Ascending aorta (tissue), 2 donors: ENCODE measurements at regions of chr1 and their contacts with region 1.

Region 1: DNA sequence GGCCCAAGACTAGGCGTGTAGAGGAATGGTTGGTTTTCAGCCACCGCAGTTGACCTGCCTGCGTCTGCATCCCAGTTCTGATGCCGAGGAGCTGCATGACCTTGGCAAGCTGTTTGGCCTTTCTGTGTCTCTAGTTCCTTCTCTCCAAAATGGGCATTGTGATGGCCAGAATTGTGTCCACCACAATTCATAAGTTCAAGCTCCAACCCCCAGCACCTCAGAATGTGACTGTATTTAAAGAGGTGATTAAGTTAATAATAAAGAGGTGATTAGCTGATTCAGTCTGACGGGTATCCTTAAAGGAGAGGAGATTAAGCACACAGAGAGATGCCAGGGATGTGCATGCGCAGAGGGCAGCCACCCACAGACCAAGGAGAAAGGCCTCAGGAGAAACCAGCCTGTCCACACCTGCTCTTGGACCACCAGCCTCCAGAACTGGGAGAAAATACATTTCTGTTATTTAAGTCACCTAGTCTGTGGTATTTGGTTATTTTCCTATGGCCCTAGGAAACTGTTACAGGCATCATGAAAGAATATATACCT is 28.5 kb downstream of the MAB21L3 start:
- DNase-seq: no peak
- H3K4me3 ChIP-seq: no peak overlapping the region
- H3K27ac ChIP-seq: no peak overlapping the region
- H3K4me1 ChIP-seq: no peaks in the 10 kb centered on the region
- H3K27me3 ChIP-seq: no peaks in the 10 kb centered on the region
- CTCF ChIP-seq: no peak

Region 2: GRCh38 chr1:116157096-116157495 is 17.4 kb after region 1 on chr1:
- intact Hi-C with region 1: no loop called
- DNase-seq: no peak
- H3K4me3 ChIP-seq: no peak overlapping the region
- H3K27ac ChIP-seq: no peak overlapping the region
- H3K4me1 ChIP-seq: no peaks in the 10 kb centered on the region
- H3K27me3 ChIP-seq: no peaks in the 10 kb centered on the region
- CTCF ChIP-seq: no peak

Region 3: GRCh38 chr1:116168277-116169097 is 28.8 kb after region 1 on chr1:
- intact Hi-C with region 1: loop called (anchors 1 kb)
- DNase-seq: peak in 1 of 2 donors; percentile 87
- H3K4me3 ChIP-seq: peak overlapping the region; percentile 73 to 75
- H3K27ac ChIP-seq: peak overlapping the region; percentile 62 to 65
- H3K4me1 ChIP-seq: peaks cover 16 to 22% of the 10 kb centered on the region in 2 donors
- H3K27me3 ChIP-seq: no peaks in the 10 kb centered on the region
- CTCF ChIP-seq: peak; percentile 88 to 94 (median 94)

Region 4: DNA sequence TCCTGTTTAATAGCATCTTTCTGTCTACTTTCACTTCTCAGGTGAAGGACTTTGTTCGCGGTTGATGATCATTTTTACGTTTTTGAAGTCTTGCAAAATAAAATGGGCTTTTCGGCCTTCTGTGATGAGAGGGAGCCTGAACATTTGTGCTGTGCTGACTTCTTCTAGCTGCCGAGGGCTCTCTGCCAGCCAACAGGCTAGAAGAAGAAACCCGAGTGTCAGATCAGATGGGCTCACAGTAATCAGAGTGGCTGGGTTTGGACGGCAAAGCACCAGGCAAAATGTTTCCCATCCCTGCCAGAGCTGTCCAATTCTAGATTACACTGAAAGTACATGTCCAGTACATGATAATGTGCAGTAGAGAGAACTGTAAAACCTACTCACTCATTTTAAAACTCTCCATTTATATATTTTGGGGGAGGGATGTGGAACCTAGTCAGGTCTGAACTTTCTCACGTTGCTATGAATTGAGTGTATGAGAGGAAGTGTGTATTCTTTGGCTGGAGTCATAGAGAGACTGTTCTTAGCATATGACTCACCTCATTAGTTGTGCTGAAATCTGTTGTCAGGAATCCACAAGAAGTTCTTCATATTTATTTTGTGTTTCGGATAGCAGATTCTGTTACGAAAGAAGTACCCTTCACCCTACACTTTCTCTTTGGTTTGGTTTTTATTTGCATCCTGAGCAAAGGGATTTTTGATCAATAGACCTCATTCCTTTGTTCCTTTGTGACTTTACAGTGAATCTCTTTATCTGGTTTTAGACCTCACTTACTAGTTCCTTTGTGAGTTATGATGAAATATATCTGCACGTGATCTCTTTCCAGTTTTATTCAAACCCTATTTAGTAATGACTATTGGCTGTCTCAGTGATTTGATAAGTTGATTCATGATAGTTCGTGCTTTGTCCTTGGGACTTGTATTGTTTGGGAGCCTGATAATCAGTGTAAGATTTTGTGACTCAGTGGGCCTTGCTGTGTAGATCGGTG is 238.2 kb after region 1 on chr1:
- intact Hi-C with region 1: loop called (anchors 5 kb)
- DNase-seq: peak in 1 of 2 donors; percentile 75
- H3K4me3 ChIP-seq: peak overlapping the region; percentile 78 to 81
- H3K27ac ChIP-seq: peak overlapping the region; percentile 95 to 96
- H3K4me1 ChIP-seq: peaks cover 27 to 71% of the 10 kb centered on the region in 2 donors
- H3K27me3 ChIP-seq: no peaks in the 10 kb centered on the region
- CTCF ChIP-seq: no peak

Region 5: DNA sequence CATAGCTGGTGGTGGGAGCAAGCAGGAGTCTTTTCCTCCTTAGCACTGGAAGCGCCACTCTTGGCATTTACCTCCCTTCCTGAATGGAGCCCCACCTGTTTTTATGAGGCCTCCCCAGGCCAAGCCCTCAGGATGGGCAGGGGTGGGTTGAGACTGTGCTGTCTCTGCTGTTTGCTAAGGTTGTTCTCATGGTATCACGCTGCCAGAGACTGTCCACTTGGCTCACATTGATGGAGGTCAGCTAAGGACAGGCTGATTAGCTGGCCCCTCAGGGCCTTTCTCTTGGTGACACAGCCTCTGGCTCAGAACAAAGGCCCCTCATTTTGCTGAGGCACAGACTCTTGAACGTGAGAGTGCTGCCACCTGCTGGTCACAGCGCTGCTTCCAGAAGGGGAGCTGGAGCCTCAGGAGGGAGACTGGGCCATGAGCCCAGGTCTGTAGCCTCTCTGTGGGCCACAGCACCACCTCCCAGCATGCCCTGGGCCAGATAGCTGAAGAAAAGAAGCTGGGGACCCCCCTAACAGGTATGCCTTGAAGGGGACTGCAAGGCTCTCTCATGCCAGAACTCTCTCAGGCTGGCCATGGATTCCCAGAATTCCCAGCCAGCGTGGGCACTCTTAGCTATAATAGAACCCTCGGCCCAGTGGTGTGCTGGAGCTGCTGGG is 345.5 kb after region 1 on chr1:
- intact Hi-C with region 1: loop called (anchors 2 kb)
- DNase-seq: peak in 1 of 2 donors; percentile 92
- H3K4me3 ChIP-seq: no peak overlapping the region
- H3K27ac ChIP-seq: no peak overlapping the region
- H3K4me1 ChIP-seq: peaks cover 0 to 4% of the 10 kb centered on the region in 2 donors
- H3K27me3 ChIP-seq: no peaks in the 10 kb centered on the region
- CTCF ChIP-seq: peak; percentile 89 to 91 (median 91)

Region 6: DNA sequence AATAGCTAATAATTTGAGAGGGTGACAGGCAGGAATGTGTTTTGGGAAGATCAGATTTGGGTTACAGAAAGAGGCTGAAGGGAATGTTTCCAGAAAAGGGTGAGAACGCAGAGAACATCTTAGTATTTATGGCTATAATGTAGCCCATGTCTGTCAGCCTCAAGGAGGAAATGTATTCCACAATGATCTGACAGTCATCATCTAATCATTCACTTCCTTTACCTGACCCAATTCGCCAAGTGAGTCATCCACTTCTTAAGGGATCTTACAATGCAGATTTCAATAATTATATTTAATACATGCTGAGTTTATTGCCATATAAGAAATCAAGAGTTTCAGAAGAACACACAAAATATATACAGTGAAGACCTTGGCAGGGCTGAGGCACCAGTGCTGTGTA is 971.1 kb after region 1 on chr1:
- intact Hi-C with region 1: no loop called
- DNase-seq: no peak
- H3K4me3 ChIP-seq: no peak overlapping the region
- H3K27ac ChIP-seq: no peak overlapping the region
- H3K4me1 ChIP-seq: no peaks in the 10 kb centered on the region
- H3K27me3 ChIP-seq: no peaks in the 10 kb centered on the region
- CTCF ChIP-seq: no peak